Esophagus muscularis mucosa (tissue), 4 donors: ENCODE measurements at regions of chr11 and their contacts with region 1.

Region 1: DNA sequence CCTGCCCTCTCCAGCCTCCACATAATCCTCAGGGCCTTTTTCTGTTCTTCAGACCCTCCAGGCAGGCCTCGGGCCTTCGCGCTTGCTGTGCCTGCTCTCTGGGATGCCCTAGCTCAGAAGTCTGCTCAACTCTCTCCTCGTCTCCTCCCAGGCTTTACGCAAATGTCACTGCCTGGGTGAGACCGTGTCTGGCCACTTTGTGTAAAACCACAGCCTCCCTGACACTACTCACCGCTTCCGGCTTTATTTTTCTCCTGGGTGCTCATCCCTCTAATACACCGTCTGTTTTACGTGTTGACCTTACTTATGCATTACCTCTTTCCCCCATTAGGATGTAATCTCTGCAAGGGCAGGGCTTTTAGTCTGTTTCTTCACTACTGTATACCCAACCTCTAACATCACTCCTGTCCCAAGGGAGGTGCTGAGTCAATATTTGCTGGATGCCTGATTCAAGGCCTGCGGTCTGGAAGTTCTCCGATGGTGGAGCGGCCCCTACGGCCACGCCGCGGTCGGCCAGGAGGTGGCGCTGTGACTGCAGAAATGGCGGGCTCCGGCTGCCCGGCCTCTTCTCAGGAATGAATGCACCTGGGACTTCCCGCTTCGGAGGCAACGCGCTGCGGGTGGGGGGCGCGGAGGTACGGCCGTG is 58.2 kb upstream of the THY1 start:
- DNase-seq: peak; percentile 97
- H3K4me3 ChIP-seq: peak overlapping the region in 2 of 4 donors; percentile 12 to 29
- H3K27ac ChIP-seq: no peak overlapping the region
- H3K4me1 ChIP-seq: peaks cover 3 to 15% (median 10%) of the 10 kb centered on the region in 4 donors
- H3K27me3 ChIP-seq: peaks cover 0 to 7% (median 0%) of the 10 kb centered on the region in 4 donors
- CTCF ChIP-seq: peak; percentile 93 to 95 (median 93)
- EP300 ChIP-seq: no peak
- POLR2A ChIP-seq: no peak

Region 2: GRCh38 chr11:119306373-119306890 is 174.7 kb before region 1 on chr11:
- intact Hi-C with region 1: no loop called
- DNase-seq: no peak
- H3K4me3 ChIP-seq: no peak overlapping the region
- H3K27ac ChIP-seq: peak overlapping the region; percentile 98 to 99 (median 98)
- H3K4me1 ChIP-seq: peaks cover 5 to 74% (median 62%) of the 10 kb centered on the region in 4 donors
- H3K27me3 ChIP-seq: no peaks in the 10 kb centered on the region
- CTCF ChIP-seq: no peak
- EP300 ChIP-seq: no peak
- POLR2A ChIP-seq: no peak

Region 3: DNA sequence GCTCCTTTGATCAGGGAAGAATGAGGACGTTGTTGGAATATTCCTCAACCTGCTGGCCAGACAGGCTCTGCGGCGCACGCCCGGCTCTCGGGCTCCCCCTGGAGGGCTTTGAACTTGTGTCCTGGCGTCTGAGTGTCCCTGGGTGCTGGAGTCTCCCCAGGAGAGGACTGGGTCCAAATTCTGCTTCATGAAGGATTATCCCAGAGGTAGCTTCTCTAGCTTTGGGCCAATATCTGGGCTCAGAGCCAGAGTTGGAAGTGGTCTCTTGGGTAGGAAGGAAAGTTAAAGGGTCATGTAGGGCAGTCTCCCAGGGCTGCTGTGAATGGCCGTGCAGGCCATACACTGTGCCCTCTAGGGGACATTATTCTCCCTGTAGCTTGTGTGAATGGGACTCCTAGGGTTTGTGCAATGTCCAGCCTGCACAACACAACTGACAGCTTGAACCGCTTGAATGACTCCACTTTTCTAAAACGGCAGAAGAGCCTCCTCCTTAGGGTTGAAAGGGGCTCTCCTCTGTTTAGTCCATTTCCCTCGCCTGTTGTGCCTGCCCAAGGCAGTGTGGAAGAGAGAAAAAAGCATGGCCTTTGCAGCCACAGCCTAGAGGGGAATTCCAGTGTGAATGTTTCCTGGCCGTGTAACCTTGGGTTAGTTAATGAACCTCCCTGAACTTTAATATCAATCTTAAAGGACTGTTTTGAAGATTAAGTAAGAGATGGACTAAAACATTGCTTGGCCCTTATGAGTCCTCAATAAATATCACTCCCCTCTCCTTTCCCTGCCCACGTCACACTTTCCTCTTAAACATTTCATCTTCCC is 53.0 kb after region 1 on chr11:
- intact Hi-C with region 1: loop called (anchors 1 kb)
- DNase-seq: no peak
- H3K4me3 ChIP-seq: no peak overlapping the region
- H3K27ac ChIP-seq: no peak overlapping the region
- H3K4me1 ChIP-seq: peaks cover 0 to 9% (median 7%) of the 10 kb centered on the region in 4 donors
- H3K27me3 ChIP-seq: peaks cover 0 to 12% (median 0%) of the 10 kb centered on the region in 4 donors
- CTCF ChIP-seq: peak; percentile 58 to 85 (median 69)
- EP300 ChIP-seq: no peak
- POLR2A ChIP-seq: no peak

Region 4: GRCh38 chr11:119666463-119667131 is 185.5 kb after region 1 on chr11:
- intact Hi-C with region 1: loop called (anchors 10 kb)
- DNase-seq: no peak
- H3K4me3 ChIP-seq: no peak overlapping the region
- H3K27ac ChIP-seq: no peak overlapping the region
- H3K4me1 ChIP-seq: peaks cover 11 to 19% (median 16%) of the 10 kb centered on the region in 4 donors
- H3K27me3 ChIP-seq: no peaks in the 10 kb centered on the region
- CTCF ChIP-seq: peak; percentile 86 to 96 (median 91)
- EP300 ChIP-seq: no peak
- POLR2A ChIP-seq: no peak

Region 5: DNA sequence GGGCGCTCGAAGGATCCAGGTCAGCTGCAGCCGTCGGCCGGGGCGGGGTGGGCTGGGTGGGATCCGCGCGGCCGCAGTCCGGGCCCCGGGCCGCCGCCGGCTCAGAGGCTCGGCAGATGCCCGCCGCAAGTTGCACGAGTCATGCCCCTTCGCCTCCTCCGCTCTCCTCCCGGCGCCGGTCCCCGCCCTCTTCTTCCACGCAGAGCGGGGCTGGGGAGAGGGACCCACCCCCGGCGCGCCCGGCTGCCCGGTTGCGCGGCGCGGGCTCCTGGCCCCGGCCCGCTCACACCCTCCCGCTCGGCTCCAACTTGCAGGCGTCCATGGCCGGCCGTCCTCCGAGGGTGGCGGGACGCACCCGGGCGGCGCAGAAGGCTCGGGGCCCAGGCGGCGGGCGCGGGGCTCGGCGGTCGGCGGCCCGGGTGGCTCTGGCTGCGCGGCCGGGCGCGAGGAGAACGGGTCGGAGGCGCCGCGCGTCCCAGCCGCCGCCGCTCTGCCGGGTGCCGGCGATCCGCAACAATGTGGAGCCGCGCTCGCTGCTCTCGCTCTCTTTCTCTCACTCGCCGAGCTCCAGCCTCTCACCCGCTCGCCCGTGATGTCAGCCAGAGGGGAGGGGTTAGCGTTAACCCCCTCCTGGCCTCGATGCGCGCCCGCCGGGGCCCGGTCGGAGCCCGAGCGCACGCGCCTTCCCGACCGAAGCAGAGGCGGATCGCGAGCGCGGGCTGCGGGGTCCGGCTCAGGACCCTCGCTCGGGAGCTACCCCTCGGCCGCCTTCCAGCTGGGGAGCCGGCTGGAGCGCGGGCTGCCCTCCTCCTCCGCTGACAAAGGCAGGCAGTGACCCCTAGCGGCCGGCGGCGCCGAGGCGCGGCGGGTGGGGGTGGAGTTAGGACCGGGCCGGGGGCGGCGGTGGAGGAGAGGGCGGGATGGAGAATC is 247.8 kb after region 1 on chr11 and contains the start of gene NECTIN1:
- intact Hi-C with region 1: loop called (anchors 5 kb)
- DNase-seq: peak; percentile 97
- H3K4me3 ChIP-seq: peak within 1 kb of the TSS; percentile 80 to 97 (median 84)
- H3K27ac ChIP-seq: peak within 1 kb of the TSS; percentile 87 to 93 (median 89)
- H3K4me1 ChIP-seq: peaks cover 13 to 36% (median 34%) of the 10 kb centered on the region in 4 donors
- H3K27me3 ChIP-seq: no peaks in the 10 kb centered on the region
- CTCF ChIP-seq: peak; percentile 84 to 98 (median 98)
- EP300 ChIP-seq: no peak
- POLR2A ChIP-seq: no peak
- total RNA-seq, gene NECTIN1: 1.7 to 4.0 (median 2.5) TPM

Region 6: DNA sequence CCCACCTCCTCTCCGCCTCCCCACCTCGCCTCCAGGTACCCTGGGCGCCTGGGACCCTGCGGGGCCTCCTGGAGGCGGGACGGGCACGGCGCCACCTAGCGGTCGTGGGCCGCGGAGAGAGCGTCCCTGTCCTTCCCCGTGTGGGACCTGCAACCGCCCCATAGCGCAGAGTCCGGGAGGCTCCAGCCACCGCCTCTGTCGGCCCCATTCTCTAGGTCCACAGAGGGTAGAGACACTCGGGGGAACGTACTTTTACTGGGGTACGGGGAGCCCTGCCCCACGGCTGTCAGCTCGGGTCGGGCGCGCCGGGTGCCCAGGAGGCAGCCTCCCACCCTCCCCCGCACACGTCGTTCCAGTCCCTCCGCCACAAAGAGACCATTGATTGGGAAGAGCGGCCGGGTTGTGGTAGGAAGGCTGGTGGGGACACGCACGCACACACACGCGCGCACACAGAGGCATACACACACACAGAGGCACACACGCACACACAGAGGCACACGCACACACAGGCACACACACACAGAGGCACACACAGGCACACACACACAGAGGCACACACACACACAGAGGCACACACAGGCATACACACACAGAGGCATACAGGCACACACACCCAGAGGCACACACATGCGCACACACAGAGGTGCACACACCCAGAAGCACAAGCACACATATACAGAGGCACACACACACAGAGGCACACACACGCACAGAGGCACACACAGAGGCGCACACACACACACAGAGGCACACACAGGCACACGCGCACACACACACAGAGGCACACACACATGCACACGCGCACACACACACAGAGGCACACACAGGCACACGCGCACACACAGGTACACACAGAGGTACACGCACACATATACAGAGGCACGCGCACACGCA is 260.5 kb after region 1 on chr11:
- intact Hi-C with region 1: loop called (anchors 5 kb)
- DNase-seq: no peak
- H3K4me3 ChIP-seq: peak overlapping the region; percentile 32 to 45 (median 37)
- H3K27ac ChIP-seq: no peak overlapping the region
- H3K4me1 ChIP-seq: peaks cover 7 to 23% (median 22%) of the 10 kb centered on the region in 4 donors
- H3K27me3 ChIP-seq: peaks cover 0 to 74% (median 22%) of the 10 kb centered on the region in 4 donors
- CTCF ChIP-seq: peak; percentile 45 to 84 (median 75)
- EP300 ChIP-seq: no peak
- POLR2A ChIP-seq: no peak

Region 7: DNA sequence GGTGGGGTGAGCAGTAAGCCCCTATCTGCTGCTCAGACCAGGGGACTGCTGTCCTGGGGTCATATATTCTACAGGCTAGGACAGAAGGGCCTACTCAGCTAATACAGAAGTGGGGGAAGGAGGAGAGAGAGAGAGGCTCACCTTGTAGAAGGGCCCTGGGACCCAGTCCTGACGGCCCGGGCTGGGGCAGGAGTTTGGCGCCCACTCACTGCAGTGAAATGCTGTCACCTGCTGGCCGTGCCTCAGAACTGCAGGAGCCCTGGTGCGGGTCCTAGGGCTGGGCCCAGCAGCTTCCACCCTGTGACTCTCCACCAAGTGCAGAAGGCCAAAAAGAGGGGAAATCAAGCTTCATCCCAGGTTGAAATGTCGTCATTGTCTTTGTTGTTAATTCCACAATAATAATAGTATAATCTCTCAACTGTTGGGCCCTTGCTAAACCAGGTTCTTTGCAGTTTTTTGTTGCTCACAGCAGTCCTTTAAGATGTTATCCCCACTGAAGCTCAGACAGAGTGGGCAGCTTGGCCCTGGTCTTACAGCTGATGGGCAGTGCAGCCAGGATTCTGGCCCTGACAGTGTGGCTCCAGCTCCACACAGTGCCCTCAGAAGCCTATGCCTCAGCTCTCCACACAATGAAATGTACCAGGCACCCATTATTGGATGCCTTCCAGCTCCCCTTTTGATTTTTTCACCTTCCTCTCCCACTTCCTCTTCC is 627.2 kb after region 1 on chr11:
- intact Hi-C with region 1: loop called (anchors 5 kb)
- DNase-seq: no peak
- H3K4me3 ChIP-seq: no peak overlapping the region
- H3K27ac ChIP-seq: no peak overlapping the region
- H3K4me1 ChIP-seq: peaks cover 0 to 4% (median 0%) of the 10 kb centered on the region in 4 donors
- H3K27me3 ChIP-seq: peaks cover 0 to 25% (median 0%) of the 10 kb centered on the region in 4 donors
- CTCF ChIP-seq: peak; percentile 94 to 100 (median 98)
- EP300 ChIP-seq: no peak
- POLR2A ChIP-seq: no peak